ENCODE measurements at regions of chr11 and their contacts with region 1.

Region 1: DNA sequence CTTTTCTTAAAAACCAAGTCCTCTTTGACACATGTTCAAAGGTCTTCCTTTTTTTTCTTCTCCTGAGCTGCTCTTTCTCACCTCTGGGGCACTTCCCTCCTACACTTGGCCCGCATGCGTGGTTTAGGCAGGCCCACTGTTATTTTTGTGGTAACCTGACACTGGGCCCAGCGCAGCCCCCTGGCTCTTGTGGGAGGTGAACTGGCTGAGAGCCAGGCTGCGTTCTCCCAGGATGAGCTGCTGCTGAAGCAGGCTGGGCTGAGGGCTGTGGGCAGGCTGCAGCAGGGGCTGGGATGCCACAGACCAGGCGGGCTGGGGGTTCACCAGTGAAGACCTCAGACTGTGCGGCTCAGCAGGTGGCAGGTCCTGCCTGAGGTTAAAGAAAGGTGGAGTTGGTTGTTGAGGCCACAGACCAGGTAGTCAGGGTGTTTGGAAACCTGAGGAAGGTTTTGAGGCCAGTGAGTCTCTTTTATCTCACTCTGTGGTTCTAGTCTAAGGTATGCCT is 72.4 kb downstream of the TEAD1 start:
- DNase-seq: peak; percentile 60 to 93
- ATAC-seq: peak; percentile 74 to 82 (median 76)
- H3K4me3 ChIP-seq: peak overlapping the region; percentile 56
- H3K27ac ChIP-seq: peak overlapping the region; percentile 81
- H3K4me1 ChIP-seq: peaks cover 88% of the 10 kb centered on the region
- H3K27me3 ChIP-seq: no peaks in the 10 kb centered on the region
- CTCF ChIP-seq: peak; percentile 25

Region 2: DNA sequence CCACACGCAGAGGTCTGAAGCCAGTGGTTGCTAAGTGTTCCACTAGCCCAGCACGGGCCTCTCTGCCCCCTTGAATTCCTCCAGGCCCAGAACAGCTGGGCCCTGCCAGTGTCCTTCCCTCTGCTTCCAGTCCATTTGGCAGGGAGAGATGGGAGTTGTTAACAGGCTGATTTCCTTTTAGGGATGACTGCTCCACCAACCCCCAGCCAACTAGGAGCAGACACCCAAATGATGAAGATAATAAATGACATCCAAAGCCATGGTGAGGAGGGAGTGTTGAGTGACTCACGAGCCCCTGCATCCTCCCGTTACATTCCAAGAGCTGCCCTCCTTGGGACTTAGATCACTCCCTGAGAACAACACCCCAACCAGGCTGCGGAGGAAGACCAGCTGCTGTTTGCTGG is 348.7 kb before region 1 on chr11:
- intact Hi-C with region 1: no loop called
- DNase-seq: peak; percentile 33 to 57
- ATAC-seq: peak; percentile 69 to 85 (median 74)
- H3K4me3 ChIP-seq: no peak overlapping the region
- H3K27ac ChIP-seq: peak overlapping the region; percentile 10
- H3K4me1 ChIP-seq: peaks cover 3% of the 10 kb centered on the region
- H3K27me3 ChIP-seq: no peaks in the 10 kb centered on the region
- CTCF ChIP-seq: no peak

Region 3: DNA sequence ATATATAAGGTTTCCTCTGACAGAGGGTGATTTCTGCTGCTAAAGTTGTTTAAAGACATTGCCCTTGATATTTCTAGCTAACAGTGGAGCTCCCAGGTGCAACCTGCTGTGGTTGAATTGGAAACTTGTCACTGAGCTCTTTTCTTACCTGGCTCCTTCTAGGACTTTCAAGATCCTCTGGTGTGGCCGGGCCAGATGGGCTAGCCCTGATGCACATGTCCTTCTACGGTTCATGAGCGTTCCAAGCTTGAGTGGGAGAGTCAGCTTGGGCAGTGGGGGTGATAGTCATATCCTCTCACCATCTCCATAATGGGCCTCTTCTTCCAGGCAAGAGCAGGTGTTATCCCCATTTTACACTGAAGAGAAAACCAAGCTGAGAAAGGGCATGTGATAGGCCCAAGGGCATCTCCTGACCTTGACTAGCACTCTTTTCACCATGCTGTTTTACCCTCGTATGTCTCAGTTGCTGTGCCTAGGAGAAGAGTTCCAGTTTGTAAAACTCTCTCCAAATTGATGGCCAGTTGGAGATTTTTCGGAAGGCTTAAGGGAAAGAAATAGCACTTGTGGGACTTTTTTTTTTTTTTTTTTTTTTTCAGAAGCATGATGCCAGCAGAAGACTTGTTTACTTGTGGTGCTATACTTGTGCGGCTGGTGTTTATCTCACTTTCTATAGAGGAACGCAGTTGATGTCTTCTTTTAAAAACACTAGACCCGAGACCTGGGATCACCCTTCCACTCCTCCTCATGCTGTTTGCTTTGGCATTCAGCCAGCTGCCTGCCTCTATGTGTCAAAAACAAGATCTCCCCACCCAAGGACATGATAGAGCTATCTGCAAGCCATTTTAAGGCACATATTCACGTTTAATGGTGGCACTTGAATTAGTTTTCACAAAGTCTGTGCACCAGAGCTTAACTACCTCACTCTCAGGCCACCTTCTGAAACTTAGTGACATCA is 39.8 kb before region 1 on chr11:
- intact Hi-C with region 1: loop called (anchors 5 kb)
- DNase-seq: no peak
- ATAC-seq: peak; percentile 8 to 41 (median 28)
- H3K4me3 ChIP-seq: no peak overlapping the region
- H3K27ac ChIP-seq: peak overlapping the region; percentile 70
- H3K4me1 ChIP-seq: peaks cover 83% of the 10 kb centered on the region
- H3K27me3 ChIP-seq: no peaks in the 10 kb centered on the region
- CTCF ChIP-seq: no peak

Region 4: GRCh38 chr11:12787847-12788246 is 41.2 kb after region 1 on chr11:
- intact Hi-C with region 1: loop called in 1 of 2 experiments (anchors 5 kb)
- DNase-seq: no peak
- ATAC-seq: peak in 2 of 4 donors; percentile 9 to 46
- H3K4me3 ChIP-seq: peak overlapping the region; percentile 14
- H3K27ac ChIP-seq: peak overlapping the region; percentile 73
- H3K4me1 ChIP-seq: peaks cover 86% of the 10 kb centered on the region
- H3K27me3 ChIP-seq: no peaks in the 10 kb centered on the region
- CTCF ChIP-seq: no peak

Region 5: DNA sequence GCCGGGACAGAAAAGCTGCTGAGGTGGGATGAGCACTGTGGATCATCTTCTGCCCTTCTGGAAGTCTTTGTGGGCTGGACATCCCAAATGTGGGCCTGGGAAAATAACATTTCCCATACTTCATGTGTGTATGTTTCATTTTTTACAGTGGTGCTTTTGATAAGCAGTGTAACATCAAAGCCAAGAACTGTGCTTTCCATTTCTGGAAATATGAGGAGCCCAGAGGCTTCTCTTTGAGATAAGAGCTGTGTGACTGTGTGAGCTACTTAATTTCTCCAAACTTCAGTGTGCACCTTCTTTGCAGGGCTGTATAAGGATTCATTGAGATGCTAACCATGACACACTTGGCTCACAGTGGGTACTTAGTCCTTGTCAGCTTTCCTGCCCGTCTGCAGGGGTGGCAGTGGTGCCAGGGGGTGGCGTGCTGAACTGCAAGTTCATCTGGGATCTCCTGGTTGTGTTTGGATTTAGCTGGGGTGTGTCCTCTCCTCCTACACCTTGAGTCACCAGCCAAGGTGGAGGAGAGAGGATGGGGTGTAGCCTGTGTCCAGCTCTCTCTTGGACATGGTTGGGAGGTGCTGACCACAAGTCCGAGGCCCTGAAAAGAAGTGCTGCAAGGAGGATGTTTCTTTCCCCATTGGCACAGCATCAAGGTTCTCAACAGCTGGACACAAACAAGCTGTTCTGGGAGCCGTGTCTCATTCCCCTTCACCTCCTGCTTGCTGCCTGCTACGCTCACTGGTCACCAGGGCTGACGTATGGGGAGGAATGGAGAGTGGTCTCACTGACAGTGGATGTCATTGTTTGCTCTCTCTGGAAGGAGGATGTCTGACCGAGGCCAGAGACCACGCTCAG is 67.0 kb after region 1 on chr11:
- intact Hi-C with region 1: loop called in 1 of 2 experiments (anchors 10 kb)
- DNase-seq: peak in 1 of 2 donors; percentile 63
- ATAC-seq: peak in 3 of 4 donors; percentile 52 to 60 (median 56)
- H3K4me3 ChIP-seq: no peak overlapping the region
- H3K27ac ChIP-seq: peak overlapping the region; percentile 87
- H3K4me1 ChIP-seq: peaks cover 75% of the 10 kb centered on the region
- H3K27me3 ChIP-seq: no peaks in the 10 kb centered on the region
- CTCF ChIP-seq: no peak